Endothelial cell of umbilical vein (primary cell): ENCODE measurements at regions of chr14 and their contacts with region 1.

Region 1: DNA sequence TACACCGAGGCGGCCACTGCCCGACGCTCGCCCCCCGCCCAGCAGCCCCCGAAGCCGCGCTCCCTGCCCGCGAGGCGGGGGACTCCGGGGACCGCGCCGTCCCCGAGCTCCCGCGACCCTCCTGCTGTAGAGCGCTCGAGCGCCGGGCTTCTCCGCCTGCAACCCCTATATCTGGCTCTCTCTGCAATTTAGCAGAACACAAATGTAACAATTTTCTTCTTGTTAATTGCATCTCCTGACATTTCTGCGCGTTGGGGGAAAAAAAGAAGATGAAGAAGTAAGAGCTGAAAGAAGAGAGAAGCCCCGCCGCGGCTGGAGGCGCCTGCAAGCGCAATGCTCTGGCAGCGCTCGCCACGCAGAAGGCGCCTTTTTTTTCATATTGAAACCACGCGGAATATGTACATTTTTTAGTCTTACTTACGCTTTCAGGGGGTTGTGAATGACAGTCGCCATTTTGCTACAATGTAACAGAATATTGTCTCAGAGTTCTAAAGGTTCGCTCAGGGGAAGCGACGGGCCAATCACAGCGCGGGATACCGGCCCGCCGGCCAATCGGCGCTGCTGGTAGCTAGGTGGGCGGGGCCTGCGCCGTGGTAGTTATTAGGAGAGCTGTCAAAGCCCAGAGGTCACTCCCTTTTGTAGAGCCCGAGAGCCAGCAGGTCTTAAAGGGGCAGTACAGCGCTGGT is at the start of gene DPF3:
- DNase-seq: peak; percentile 97
- H3K4me3 ChIP-seq: peak within 1 kb of the TSS; percentile 72 to 99 (median 92)
- H3K27ac ChIP-seq: peak within 1 kb of the TSS; percentile 66
- H3K4me1 ChIP-seq: peaks cover 27% of the 10 kb centered on the region
- H3K27me3 ChIP-seq: no peaks in the 10 kb centered on the region
- CTCF ChIP-seq: no peak
- POLR2A ChIP-seq: peak; percentile 44
- total RNA-seq, gene DPF3: 3.5 and 8.1 TPM in 2 replicates

Region 2: DNA sequence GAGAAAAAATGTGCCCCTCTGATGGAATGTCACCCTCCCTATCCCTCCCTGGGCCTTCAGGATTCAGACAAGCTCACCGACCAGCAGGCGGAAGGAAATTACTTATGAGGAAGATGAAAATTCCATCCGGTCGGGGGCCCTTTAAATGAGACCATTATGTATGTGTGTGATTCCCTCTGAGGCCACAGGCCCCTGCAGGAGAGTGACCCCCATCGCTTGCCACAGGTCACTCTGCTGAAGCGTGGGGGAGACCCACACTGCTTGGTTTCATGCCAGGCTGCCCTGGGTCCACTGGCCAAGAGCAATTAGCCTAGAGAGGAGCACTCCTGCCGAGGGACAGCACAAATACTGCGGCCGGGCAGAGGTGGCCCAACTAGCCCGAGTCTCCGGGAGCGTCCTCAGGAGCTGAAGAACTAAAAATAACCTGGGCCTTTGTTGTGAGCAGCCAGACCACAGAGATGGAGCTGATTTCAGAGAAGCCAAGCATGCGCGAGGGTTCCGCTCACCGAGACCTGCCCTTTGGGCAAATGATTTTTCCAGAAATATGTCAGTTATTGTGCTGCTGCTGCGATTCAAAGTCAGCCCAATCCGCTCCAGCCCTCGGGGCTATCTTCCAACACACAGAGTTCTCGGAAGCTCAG is 276.3 kb before region 1 on chr14:
- CTCF ChIA-PET with region 1: no interaction called
- POLR2A ChIA-PET with region 1: no interaction called
- dilution Hi-C with region 1: no loop called
- intact Hi-C with region 1: loop called (anchors 1 kb)
- DNase-seq: peak; percentile 48
- H3K4me3 ChIP-seq: no peak overlapping the region
- H3K27ac ChIP-seq: peak overlapping the region; percentile 80
- H3K4me1 ChIP-seq: peaks cover 44% of the 10 kb centered on the region
- H3K27me3 ChIP-seq: no peaks in the 10 kb centered on the region
- CTCF ChIP-seq: no peak
- POLR2A ChIP-seq: no peak

Region 3: GRCh38 chr14:72781476-72782181 is 112.2 kb before region 1 on chr14:
- CTCF ChIA-PET with region 1: interaction called, 3 read pairs
- POLR2A ChIA-PET with region 1: no interaction called
- dilution Hi-C with region 1: no loop called
- intact Hi-C with region 1: loop called (anchors 1 kb)
- DNase-seq: peak; percentile 59
- H3K4me3 ChIP-seq: no peak overlapping the region
- H3K27ac ChIP-seq: peak overlapping the region; percentile 60
- H3K4me1 ChIP-seq: peaks cover 4% of the 10 kb centered on the region
- H3K27me3 ChIP-seq: no peaks in the 10 kb centered on the region
- CTCF ChIP-seq: no peak
- POLR2A ChIP-seq: no peak

Region 4: GRCh38 chr14:72822946-72823611 is 70.7 kb before region 1 on chr14:
- CTCF ChIA-PET with region 1: no interaction called
- POLR2A ChIA-PET with region 1: no interaction called
- dilution Hi-C with region 1: no loop called
- intact Hi-C with region 1: no loop called
- DNase-seq: no peak
- H3K4me3 ChIP-seq: no peak overlapping the region
- H3K27ac ChIP-seq: no peak overlapping the region
- H3K4me1 ChIP-seq: no peaks in the 10 kb centered on the region
- H3K27me3 ChIP-seq: no peaks in the 10 kb centered on the region
- CTCF ChIP-seq: no peak
- POLR2A ChIP-seq: no peak

Region 5: DNA sequence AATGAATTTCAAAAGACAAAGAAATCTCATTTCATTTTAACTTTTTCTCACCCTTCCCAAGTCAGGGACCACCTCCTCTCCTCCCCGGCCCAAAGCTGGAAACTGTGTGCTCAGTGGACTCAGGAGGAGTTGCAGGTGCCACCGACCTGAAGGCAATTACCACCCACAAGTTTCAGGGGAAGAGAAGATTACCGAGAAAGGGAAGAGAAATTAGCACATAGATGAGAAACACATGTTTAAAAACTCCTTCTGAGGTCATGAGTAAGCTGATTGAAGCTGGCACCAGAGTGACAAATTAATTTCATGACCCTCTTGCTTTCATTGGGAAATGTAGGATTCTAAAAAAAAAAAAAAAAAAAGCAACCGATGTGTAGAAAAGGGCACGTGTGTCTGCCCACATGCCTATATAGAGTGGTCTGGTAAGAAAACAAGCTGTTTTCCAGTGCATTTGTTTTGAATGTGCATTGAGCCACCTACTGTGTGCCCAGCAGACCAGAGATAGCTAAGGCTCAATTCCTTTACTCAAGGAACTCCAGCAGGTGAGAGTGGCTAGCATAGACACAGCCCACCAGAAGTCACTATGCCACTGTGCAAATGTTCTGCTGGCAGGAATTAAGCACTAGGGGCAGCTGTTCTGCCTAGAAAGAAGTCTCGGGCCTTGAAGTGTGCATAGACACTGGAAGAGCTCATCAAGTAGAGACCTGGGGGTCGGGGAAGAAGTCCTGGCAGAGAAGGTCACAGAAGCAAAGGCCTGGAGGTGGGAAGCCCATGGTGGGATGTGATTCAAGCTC is 30.4 kb before region 1 on chr14:
- CTCF ChIA-PET with region 1: no interaction called
- POLR2A ChIA-PET with region 1: no interaction called
- dilution Hi-C with region 1: no loop called
- intact Hi-C with region 1: no loop called
- DNase-seq: no peak
- H3K4me3 ChIP-seq: no peak overlapping the region
- H3K27ac ChIP-seq: no peak overlapping the region
- H3K4me1 ChIP-seq: peaks cover 4% of the 10 kb centered on the region
- H3K27me3 ChIP-seq: no peaks in the 10 kb centered on the region
- CTCF ChIP-seq: no peak
- POLR2A ChIP-seq: no peak

Region 6: GRCh38 chr14:72904840-72905561 is 11.2 kb after region 1 on chr14:
- CTCF ChIA-PET with region 1: interaction called, 59 read pairs
- POLR2A ChIA-PET with region 1: interaction called, 7 read pairs
- dilution Hi-C with region 1: no loop called
- intact Hi-C with region 1: no loop called
- DNase-seq: peak; percentile 68
- H3K4me3 ChIP-seq: no peak overlapping the region
- H3K27ac ChIP-seq: no peak overlapping the region
- H3K4me1 ChIP-seq: no peaks in the 10 kb centered on the region
- H3K27me3 ChIP-seq: no peaks in the 10 kb centered on the region
- CTCF ChIP-seq: peak; percentile 78 to 93
- POLR2A ChIP-seq: no peak

Region 7: DNA sequence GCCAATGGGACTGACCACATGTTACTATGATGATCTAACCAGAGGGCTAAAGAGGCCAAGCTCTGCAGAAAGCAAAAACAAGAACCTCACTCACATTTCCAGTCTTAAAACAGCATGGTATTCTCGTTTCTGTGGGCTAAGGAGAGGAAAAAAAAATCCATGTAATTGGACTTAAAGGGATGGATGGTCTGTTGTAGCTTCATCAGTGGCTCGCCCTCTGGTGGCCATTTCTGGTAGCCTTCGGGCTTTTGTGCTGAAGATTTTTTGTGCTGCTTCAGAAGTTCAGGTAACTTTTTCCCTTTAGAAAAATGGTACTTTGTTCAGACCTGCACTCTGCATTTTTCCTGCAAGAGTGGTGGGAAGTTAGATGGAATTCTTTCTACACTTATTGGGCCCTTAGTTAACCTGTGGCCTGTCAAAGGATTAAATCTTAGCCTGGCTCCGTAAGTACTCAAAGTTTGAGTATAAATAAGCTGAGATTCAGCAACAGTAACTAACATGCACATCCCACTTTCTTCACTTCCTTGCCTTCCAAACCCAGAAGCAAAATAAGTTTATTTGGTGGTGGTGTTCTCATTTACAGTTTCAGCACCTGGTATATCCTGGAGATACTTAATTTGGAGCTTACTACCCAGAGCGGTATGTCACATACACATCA is 54.8 kb after region 1 on chr14:
- CTCF ChIA-PET with region 1: interaction called, 10 read pairs
- POLR2A ChIA-PET with region 1: no interaction called
- dilution Hi-C with region 1: no loop called
- intact Hi-C with region 1: no loop called
- DNase-seq: peak; percentile 73
- H3K4me3 ChIP-seq: no peak overlapping the region
- H3K27ac ChIP-seq: no peak overlapping the region
- H3K4me1 ChIP-seq: no peaks in the 10 kb centered on the region
- H3K27me3 ChIP-seq: no peaks in the 10 kb centered on the region
- CTCF ChIP-seq: peak; percentile 87
- POLR2A ChIP-seq: no peak

Region 8: DNA sequence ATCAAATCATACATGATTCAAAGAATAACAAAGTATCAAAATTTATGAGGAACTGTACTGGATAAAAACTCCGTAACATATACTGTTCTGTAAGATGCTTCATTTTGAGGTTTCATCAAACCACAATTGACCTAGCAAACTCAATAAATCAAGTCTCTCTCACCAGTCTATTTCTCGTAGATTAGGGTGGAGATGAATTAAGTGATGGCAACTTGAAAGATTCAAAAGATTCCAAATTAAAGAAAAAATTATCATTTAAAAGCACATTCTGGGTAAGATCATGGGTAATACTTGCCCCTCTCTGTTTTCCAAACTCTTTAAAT is 417.9 kb after region 1 on chr14:
- CTCF ChIA-PET with region 1: no interaction called
- POLR2A ChIA-PET with region 1: no interaction called
- dilution Hi-C with region 1: no loop called
- intact Hi-C with region 1: no loop called
- DNase-seq: no peak
- H3K4me3 ChIP-seq: peak overlapping the region in 1 of 3 experiments; percentile 23
- H3K27ac ChIP-seq: peak overlapping the region; percentile 31
- H3K4me1 ChIP-seq: peaks cover 20% of the 10 kb centered on the region
- H3K27me3 ChIP-seq: no peaks in the 10 kb centered on the region
- CTCF ChIP-seq: no peak
- POLR2A ChIP-seq: no peak